ENCODE measurements at regions of chr14 and their contacts with region 1.

Region 1: DNA sequence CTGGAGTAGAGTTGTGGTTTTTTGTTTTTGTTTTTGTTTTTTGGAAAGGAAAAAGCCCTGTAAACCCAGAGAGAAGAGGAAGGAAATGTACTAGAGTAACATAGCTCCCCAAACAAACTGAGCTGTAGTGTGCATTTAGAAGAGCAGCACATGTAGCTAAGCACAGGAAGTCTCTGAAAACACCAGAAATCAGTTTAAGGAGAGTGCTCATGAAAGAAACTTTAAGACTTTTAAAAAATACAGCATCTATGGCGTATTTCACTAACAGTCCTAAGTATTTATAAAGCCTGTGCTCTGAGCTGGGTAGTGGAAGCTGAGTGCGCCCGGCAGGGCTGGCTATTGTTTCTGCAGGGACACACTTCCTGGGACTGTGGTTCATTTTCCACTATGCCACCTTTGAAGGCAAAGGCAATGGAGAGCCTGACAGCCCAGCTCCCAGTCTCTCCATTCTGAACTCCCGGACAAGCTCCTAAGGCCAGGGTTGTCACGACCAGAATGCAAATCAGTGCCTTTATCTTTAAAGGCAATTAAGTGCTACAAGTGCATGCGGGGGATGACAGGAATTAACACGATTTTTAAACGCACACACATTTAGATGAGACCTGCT is 45.4 kb downstream of the NIN start:
- DNase-seq: no peak
- H3K4me3 Mint-ChIP-seq: no peak overlapping the region
- H3K27ac Mint-ChIP-seq: no peak overlapping the region
- H3K4me1 Mint-ChIP-seq: peaks cover 55% of the 10 kb centered on the region
- H3K27me3 Mint-ChIP-seq: no peaks in the 10 kb centered on the region

Region 2: DNA sequence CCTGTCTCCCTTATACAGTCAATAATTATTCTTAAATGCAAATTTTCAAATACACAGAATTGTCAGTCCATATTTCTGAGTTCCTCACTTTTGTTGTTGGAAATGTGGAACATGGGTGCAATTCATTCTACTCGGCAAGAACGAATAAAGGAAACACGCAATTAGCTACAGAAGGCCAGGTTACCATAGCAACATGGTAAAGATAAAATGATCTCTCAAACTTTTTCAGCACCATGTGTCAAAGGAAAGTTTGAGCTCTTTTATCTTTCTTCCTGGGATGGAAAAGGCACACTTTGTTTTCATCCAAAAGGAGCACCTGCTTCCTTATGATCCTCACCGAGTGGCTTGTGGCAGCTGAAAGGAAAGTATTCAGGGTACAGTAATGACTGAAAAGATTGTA is 1794.4 kb before region 1 on chr14:
- CTCF ChIA-PET with region 1: no interaction called
- POLR2A ChIA-PET with region 1: no interaction called
- intact Hi-C with region 1: no loop called
- DNase-seq: no peak
- H3K4me3 Mint-ChIP-seq: no peak overlapping the region
- H3K27ac Mint-ChIP-seq: no peak overlapping the region
- H3K4me1 Mint-ChIP-seq: no peaks in the 10 kb centered on the region
- H3K27me3 Mint-ChIP-seq: no peaks in the 10 kb centered on the region

Region 3: DNA sequence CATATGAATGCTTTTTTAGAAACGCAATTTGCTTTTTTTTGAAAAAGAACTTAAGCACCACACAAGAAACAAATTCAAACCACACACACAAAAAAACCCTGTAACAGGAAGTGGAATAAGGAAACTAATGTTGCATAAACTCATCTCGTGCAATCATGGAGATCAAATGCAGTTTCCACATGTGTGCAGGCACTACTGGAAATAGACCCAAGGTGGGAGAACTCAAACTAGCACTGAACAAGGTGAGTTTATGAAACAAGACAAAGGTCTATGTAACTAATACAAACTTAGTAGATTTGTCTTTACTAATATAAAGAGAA is 27.9 kb after region 1 on chr14:
- CTCF ChIA-PET with region 1: no interaction called
- POLR2A ChIA-PET with region 1: no interaction called
- intact Hi-C with region 1: loop called (anchors 2 kb)
- DNase-seq: no peak
- H3K4me3 Mint-ChIP-seq: peak overlapping the region; percentile 73
- H3K27ac Mint-ChIP-seq: peak overlapping the region; percentile 93
- H3K4me1 Mint-ChIP-seq: peaks cover 43% of the 10 kb centered on the region
- H3K27me3 Mint-ChIP-seq: no peaks in the 10 kb centered on the region

Region 4: GRCh38 chr14:50830932-50831725 is 45.6 kb after region 1 on chr14 and contains the start of gene NIN:
- CTCF ChIA-PET with region 1: interaction called, 6 read pairs
- POLR2A ChIA-PET with region 1: interaction called, 6 read pairs
- intact Hi-C with region 1: loop called (anchors 2 kb)
- DNase-seq: peak; percentile 77
- H3K4me3 Mint-ChIP-seq: peak within 1 kb of the TSS; percentile 92
- H3K27ac Mint-ChIP-seq: peak within 1 kb of the TSS; percentile 86
- H3K4me1 Mint-ChIP-seq: peaks cover 54% of the 10 kb centered on the region
- H3K27me3 Mint-ChIP-seq: peaks cover 6% of the 10 kb centered on the region
- total RNA-seq, gene NIN: 44.7 to 44.8 TPM

Region 5: GRCh38 chr14:50846226-50846880 is 60.8 kb after region 1 on chr14:
- CTCF ChIA-PET with region 1: no interaction called
- POLR2A ChIA-PET with region 1: no interaction called
- intact Hi-C with region 1: no loop called
- DNase-seq: no peak
- H3K4me3 Mint-ChIP-seq: no peak overlapping the region
- H3K27ac Mint-ChIP-seq: no peak overlapping the region
- H3K4me1 Mint-ChIP-seq: no peaks in the 10 kb centered on the region
- H3K27me3 Mint-ChIP-seq: no peaks in the 10 kb centered on the region

Region 6: DNA sequence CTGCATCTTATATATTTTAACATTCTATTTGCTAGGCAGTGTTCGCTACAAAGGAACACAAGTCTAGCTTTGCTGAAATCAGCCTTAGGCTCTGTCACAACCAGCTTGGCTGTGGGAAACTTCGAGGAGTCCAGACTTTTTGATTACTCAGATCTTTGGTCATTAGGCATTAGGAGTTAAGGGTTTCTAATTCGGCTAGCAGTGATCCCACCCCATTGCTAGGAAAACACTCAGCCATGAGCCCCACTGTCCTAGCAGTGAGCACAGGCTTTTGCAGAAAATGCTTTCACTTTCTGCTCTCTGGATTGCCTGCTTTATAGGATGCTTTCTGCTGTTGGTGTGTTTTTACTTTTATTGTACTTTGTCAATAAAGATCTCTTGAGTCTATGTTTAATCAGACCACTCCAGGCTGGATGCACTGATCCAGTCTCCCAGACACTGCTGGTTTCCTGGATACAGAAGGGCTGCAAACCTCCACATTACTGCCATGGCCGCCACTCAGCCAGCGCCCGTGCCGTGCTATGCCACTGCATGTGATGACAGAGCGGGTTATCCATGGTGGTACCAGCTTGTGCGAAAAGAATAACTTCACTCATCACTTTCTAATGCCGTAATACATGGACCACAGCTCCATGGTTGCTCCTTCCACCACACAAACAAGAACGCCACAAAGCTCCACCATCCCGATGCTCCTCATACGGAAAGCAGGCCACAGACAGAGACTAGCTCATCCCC is 199.7 kb after region 1 on chr14:
- CTCF ChIA-PET with region 1: no interaction called
- POLR2A ChIA-PET with region 1: no interaction called
- intact Hi-C with region 1: no loop called
- DNase-seq: no peak
- H3K4me3 Mint-ChIP-seq: no peak overlapping the region
- H3K27ac Mint-ChIP-seq: no peak overlapping the region
- H3K4me1 Mint-ChIP-seq: no peaks in the 10 kb centered on the region
- H3K27me3 Mint-ChIP-seq: peaks cover 3% of the 10 kb centered on the region

Region 7: GRCh38 chr14:51248016-51248987 is 462.7 kb after region 1 on chr14:
- CTCF ChIA-PET with region 1: no interaction called
- POLR2A ChIA-PET with region 1: no interaction called
- intact Hi-C with region 1: no loop called
- DNase-seq: no peak
- H3K4me3 Mint-ChIP-seq: no peak overlapping the region
- H3K27ac Mint-ChIP-seq: no peak overlapping the region
- H3K4me1 Mint-ChIP-seq: peaks cover 30% of the 10 kb centered on the region
- H3K27me3 Mint-ChIP-seq: no peaks in the 10 kb centered on the region

Measured in activated CD4-positive, alpha-beta memory T cell treated with anti-CD3 and anti-CD28 coated beads for 36 hours (primary cell).